ENCODE measurements at regions of chr6 and their contacts with region 1.

Region 1: DNA sequence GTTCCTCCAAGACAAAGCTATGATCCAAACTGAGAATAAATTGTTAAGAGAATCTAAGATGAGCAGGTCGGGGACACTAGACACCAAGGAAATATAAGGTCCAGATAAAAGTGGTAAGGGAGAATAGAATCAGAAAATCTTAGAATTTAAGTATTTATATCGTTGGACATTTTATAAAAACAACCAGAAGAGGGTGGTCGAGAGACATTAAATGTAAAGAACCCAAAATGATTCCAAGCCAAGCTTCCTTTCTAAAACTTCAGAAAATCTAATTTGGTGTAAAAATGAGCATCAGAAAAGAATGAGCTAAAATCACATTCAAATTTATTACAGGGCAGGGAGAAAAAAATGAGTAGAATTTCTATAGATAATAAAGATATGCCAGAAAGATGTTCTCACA is 97.8 kb upstream of the OGFRL1 start:
- DNase-seq: no peak
- H3K4me3 ChIP-seq: no peak overlapping the region
- H3K27ac ChIP-seq: no peak overlapping the region
- H3K4me1 ChIP-seq: no peaks in the 10 kb centered on the region; the same call in 1 of the 2 replicates
- H3K27me3 ChIP-seq: no peaks in the 10 kb centered on the region
- CTCF ChIP-seq: peak; percentile 73

Region 2: DNA sequence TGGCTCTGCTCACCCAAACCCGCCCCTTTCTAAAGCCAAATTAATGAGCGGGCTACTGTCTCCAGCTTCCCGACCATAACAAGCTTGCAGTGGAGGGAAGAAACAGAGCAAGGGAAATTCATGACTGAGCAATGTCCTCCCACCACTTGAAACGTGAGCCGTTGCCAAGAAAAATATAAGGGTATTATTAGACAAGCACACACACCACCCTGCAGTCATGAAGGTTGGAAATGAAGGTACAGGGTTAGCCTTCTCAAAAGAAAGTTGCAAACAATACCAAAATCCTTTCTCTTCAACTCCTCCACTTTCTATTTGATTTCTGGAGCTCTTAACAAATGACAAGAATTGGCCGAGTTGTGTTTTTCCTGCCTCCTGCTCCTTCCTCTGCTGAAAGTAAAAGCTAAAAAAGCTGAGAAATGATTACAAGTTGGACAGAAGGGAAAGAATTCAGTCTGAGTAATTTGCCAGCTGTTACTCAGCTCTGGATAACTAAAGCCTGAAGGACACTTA is 82.8 kb before region 1 on chr6:
- CTCF ChIA-PET with region 1: no interaction called
- POLR2A ChIA-PET with region 1: no interaction called
- intact Hi-C with region 1: no loop called
- DNase-seq: no peak
- H3K4me3 ChIP-seq: no peak overlapping the region
- H3K27ac ChIP-seq: no peak overlapping the region
- H3K4me1 ChIP-seq: no peaks in the 10 kb centered on the region
- H3K27me3 ChIP-seq: no peaks in the 10 kb centered on the region
- CTCF ChIP-seq: no peak

Region 3: GRCh38 chr6:71139249-71139648 is 51.6 kb before region 1 on chr6:
- CTCF ChIA-PET with region 1: no interaction called
- POLR2A ChIA-PET with region 1: no interaction called
- intact Hi-C with region 1: no loop called
- DNase-seq: peak in 1 of 2 experiments; percentile 59
- H3K4me3 ChIP-seq: no peak overlapping the region
- H3K27ac ChIP-seq: no peak overlapping the region
- H3K4me1 ChIP-seq: no peaks in the 10 kb centered on the region
- H3K27me3 ChIP-seq: no peaks in the 10 kb centered on the region
- CTCF ChIP-seq: no peak

Region 4: GRCh38 chr6:71288228-71289001 is 97.6 kb after region 1 on chr6 and contains the start of gene OGFRL1:
- CTCF ChIA-PET with region 1: interaction called, 3 read pairs
- POLR2A ChIA-PET with region 1: interaction called, 3 read pairs
- intact Hi-C with region 1: loop called (anchors 5 kb)
- DNase-seq: peak; percentile 72 to 82
- H3K4me3 ChIP-seq: peak within 1 kb of the TSS; percentile 80
- H3K27ac ChIP-seq: no peak within 1 kb of the TSS
- H3K4me1 ChIP-seq: peaks cover 24% of the 10 kb centered on the region
- H3K27me3 ChIP-seq: no peaks in the 10 kb centered on the region
- CTCF ChIP-seq: no peak
- total RNA-seq, gene OGFRL1: 8.1 and 11.0 TPM in 2 replicates

Region 5: GRCh38 chr6:71349395-71349794 is 158.6 kb after region 1 on chr6:
- CTCF ChIA-PET with region 1: interaction called, 5 read pairs
- POLR2A ChIA-PET with region 1: no interaction called
- intact Hi-C with region 1: loop called (anchors 1 kb)
- DNase-seq: peak in 1 of 2 experiments; percentile 45
- H3K4me3 ChIP-seq: no peak overlapping the region
- H3K27ac ChIP-seq: no peak overlapping the region
- H3K4me1 ChIP-seq: no peaks in the 10 kb centered on the region
- H3K27me3 ChIP-seq: no peaks in the 10 kb centered on the region
- CTCF ChIP-seq: peak; percentile 86

Region 6: DNA sequence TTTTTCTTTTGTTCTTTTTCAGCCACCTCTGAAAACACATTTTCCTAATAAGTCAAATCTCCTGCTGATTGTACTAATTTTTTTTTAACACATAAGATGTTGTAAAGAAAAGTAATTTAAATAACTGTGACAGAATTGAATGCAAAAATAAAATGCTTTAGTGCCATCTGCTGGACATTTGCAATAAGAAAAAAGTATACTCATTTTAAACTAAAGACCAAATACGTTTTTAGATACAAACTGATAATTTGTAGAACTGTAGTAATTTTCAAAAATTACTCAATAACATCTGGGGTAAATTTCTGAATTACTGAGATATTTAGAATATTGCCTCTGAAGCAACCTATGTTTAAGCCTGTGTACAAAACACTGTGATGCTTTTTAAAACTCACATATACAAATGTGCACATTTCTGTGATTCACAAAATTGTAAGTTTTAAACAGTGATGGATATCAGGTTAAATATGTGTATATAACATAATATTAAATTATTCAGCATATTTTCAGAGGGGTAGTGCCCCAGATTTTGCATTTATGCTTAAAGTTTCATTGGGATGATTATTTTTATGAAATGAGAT is 894.3 kb after region 1 on chr6:
- CTCF ChIA-PET with region 1: interaction called, 3 read pairs
- POLR2A ChIA-PET with region 1: no interaction called
- intact Hi-C with region 1: loop called (anchors 10 kb)
- DNase-seq: no peak
- H3K4me3 ChIP-seq: no peak overlapping the region
- H3K27ac ChIP-seq: no peak overlapping the region
- H3K4me1 ChIP-seq: no peaks in the 10 kb centered on the region
- H3K27me3 ChIP-seq: no peaks in the 10 kb centered on the region
- CTCF ChIP-seq: peak; percentile 77